Panc1 (cell line): ENCODE measurements at regions of chr2 and their contacts with region 1.

Region 1: DNA sequence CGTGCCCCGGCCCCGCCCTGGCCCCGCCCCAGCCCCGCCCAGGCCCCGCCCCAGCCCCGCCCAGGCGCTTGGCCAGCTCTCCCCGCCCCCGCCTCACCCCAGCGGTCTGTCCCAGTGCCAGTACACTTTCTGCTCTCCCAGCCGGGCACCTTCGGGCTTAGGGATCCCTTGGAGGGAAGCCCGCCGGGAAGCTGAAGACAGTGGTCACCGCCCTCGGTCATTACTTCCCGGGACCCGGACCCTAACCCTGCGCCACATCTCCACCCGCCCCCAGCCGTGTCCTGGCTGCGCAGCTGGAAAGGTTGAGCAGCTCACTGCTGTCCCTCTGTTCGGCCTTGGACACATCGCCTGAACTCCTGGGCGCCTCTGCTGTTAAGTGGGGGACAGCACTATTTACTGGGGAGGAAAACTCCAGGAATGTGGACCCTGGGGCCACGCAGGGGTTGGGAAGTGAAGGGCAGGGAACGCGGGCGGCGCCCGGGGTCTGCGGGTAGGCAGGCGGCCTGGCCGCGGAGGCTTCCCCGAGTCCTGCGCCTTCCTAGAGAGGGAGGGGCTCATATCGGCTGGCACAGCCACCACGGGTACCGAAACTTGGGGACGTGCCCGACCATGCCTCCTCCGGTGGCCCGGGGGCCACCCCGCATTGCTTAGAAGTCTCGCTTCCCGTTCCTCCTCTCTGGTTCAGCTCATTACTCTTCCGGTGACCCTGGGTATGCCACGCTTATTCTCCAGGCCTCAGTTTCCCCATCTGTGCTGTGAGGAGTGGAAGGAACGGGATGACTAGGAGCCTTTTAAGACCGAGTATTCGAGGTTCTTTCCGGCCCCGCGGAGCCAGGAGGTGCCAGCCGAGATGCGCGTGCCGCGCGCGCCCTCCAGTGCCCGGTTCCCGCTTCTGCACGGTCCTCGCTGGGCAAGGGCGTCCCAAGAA is 121.0 kb downstream of the GYPC start:
- DNase-seq: peak; percentile 45
- ATAC-seq: peak; percentile 91
- H3K4me3 ChIP-seq: peak overlapping the region; percentile 42 to 79
- H3K27ac ChIP-seq: no peak overlapping the region
- H3K4me1 ChIP-seq: no peaks in the 10 kb centered on the region
- H3K27me3 ChIP-seq: peaks cover 5% of the 10 kb centered on the region; the same call in 1 of the 2 replicates
- CTCF ChIP-seq: peak; percentile 98

Region 2: DNA sequence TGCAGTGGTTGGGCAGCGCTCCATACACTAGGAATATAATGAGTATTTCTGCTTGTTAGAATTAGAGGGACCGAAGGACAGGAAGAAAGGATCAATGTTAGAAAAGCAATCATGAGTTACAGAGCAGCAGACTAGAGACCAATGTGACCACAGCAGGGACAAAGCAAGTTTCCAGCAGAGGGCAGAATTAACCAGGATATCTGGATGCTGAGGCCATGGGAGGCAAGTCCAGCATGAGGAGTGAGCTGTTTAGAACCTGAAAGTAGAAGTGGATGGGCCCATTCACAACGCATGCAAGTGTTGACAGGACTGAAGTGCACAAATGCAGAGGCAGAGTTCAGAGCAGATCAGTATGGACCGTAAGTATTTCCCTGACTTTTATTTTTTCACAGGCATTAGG is 1031.4 kb before region 1 on chr2:
- CTCF ChIA-PET with region 1: interaction called, 3 read pairs
- POLR2A ChIA-PET with region 1: no interaction called
- in situ Hi-C with region 1: no loop called
- intact Hi-C with region 1: loop called (anchors 10 kb)
- DNase-seq: peak; percentile 4
- ATAC-seq: peak; percentile 80; the same call in 1 of the 2 replicates
- H3K4me3 ChIP-seq: no peak overlapping the region
- H3K27ac ChIP-seq: no peak overlapping the region
- H3K4me1 ChIP-seq: no peaks in the 10 kb centered on the region
- H3K27me3 ChIP-seq: no peaks in the 10 kb centered on the region
- CTCF ChIP-seq: peak; percentile 52

Region 3: DNA sequence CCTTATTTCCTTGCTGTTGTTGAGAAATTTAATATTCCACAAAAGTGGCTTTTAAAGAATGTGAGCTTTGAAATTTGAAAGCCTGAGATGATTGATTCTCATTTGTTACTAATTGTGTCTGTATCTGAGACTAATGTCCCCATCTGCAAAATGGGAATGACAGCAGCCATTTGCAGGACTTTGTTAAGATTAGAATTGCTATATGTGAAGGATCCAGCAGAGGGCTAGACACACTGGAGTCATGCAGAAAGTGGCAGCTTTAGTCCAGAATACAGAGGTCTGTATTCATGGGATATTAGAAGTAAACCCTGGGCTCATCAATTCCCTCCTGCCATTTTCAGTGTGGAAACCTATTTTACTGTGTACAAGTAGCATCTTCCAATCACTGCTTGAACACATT is 417.5 kb before region 1 on chr2:
- CTCF ChIA-PET with region 1: no interaction called
- POLR2A ChIA-PET with region 1: interaction called, 3 read pairs
- in situ Hi-C with region 1: no loop called
- intact Hi-C with region 1: loop called (anchors 10 kb)
- DNase-seq: peak; percentile 10
- ATAC-seq: no peak
- H3K4me3 ChIP-seq: no peak overlapping the region
- H3K27ac ChIP-seq: no peak overlapping the region
- H3K4me1 ChIP-seq: no peaks in the 10 kb centered on the region
- H3K27me3 ChIP-seq: no peaks in the 10 kb centered on the region
- CTCF ChIP-seq: peak; percentile 48

Region 4: GRCh38 chr2:126527836-126528507 is 249.0 kb before region 1 on chr2:
- CTCF ChIA-PET with region 1: interaction called, 4 read pairs
- POLR2A ChIA-PET with region 1: interaction called, 7 read pairs
- in situ Hi-C with region 1: no loop called
- intact Hi-C with region 1: loop called (anchors 1 kb)
- DNase-seq: peak; percentile 18
- ATAC-seq: no peak
- H3K4me3 ChIP-seq: no peak overlapping the region
- H3K27ac ChIP-seq: no peak overlapping the region
- H3K4me1 ChIP-seq: no peaks in the 10 kb centered on the region
- H3K27me3 ChIP-seq: no peaks in the 10 kb centered on the region
- CTCF ChIP-seq: peak; percentile 53

Region 5: GRCh38 chr2:126634273-126634861 is 142.6 kb before region 1 on chr2:
- CTCF ChIA-PET with region 1: no interaction called
- POLR2A ChIA-PET with region 1: no interaction called
- in situ Hi-C with region 1: no loop called
- intact Hi-C with region 1: loop called (anchors 10 kb)
- DNase-seq: no peak
- ATAC-seq: no peak
- H3K4me3 ChIP-seq: no peak overlapping the region
- H3K27ac ChIP-seq: no peak overlapping the region
- H3K4me1 ChIP-seq: no peaks in the 10 kb centered on the region
- H3K27me3 ChIP-seq: no peaks in the 10 kb centered on the region
- CTCF ChIP-seq: peak; percentile 83

Region 6: DNA sequence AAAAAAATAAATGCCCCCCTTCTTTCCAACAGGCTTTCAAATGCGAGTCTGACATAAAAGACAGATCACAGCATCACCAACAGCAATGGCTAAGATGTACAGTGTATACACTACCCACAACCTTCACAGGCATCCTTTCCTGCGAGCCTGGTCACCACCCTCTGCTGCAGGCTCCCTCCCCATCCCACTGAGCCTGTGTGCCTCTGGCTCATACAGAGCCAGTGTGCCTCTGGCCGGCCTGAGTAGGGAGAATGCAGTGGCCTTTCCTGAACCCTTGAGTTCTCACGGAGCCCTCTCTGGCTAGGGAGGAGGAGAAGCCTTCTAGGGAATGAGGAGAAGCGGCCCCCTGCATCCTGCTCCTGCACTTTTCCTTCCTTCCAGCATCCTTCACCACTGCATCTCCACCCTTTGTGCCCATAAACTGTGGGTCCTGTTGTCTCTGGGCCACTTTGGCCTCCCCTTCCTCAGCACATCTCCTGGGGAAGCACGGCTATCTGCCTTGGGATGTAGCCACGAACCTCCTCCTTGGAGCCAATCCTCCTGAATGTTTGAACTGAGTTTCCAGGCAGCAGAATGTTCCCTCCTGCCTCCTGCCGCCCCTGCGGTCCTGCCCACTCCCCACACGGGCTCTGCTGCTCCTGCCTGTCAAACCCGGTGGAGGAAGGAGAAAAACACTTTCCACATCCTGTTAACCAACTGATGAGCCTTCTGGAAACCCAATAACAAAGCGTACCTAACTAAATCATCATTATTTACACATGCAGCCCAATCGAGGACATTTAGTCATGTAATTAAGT is 98.5 kb before region 1 on chr2:
- CTCF ChIA-PET with region 1: no interaction called
- POLR2A ChIA-PET with region 1: no interaction called
- in situ Hi-C with region 1: no loop called
- intact Hi-C with region 1: no loop called
- DNase-seq: no peak
- ATAC-seq: 0 out of 2 replicates have a peak, but pooled peaks have one; percentile 26
- H3K4me3 ChIP-seq: no peak overlapping the region
- H3K27ac ChIP-seq: no peak overlapping the region
- H3K4me1 ChIP-seq: no peaks in the 10 kb centered on the region
- H3K27me3 ChIP-seq: no peaks in the 10 kb centered on the region
- CTCF ChIP-seq: no peak

Region 7: GRCh38 chr2:126744640-126745039 is 32.3 kb before region 1 on chr2:
- CTCF ChIA-PET with region 1: no interaction called
- POLR2A ChIA-PET with region 1: no interaction called
- in situ Hi-C with region 1: no loop called
- intact Hi-C with region 1: no loop called
- DNase-seq: no peak
- ATAC-seq: no peak
- H3K4me3 ChIP-seq: no peak overlapping the region
- H3K27ac ChIP-seq: no peak overlapping the region
- H3K4me1 ChIP-seq: no peaks in the 10 kb centered on the region
- H3K27me3 ChIP-seq: no peaks in the 10 kb centered on the region
- CTCF ChIP-seq: no peak

Region 8: DNA sequence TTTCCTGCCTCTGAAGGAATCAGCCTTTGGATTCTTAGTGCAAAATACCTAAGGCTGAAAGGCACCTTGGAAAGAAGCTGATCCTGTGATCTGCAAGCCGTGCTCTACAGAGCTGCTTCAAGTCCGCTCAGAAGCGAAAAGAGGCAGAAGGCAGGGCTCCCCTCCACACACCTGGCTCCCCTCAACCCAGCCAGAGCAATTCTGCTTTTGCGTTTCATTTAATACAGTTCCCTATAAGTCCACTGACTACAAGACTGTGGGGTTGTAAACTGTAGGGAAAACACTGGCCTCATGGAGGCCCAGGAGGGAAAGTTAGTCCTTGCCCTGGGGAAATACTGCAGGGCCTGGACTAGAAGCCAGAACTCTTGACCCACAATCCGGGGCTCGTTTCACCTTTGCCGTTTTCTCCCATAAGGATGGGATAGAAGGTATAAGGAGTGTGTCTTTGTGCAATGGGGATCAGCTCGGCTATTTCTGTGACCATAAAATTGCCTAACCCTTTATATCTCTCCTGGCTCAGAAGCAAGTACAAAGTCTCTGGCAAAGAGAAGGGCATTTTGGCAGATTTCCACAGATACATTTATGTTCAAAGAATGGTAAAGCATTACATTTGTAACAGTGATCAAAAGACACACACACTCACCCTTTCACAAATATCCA is 25.9 kb after region 1 on chr2:
- CTCF ChIA-PET with region 1: no interaction called
- POLR2A ChIA-PET with region 1: interaction called, 11 read pairs
- in situ Hi-C with region 1: no loop called
- intact Hi-C with region 1: no loop called
- DNase-seq: no peak
- ATAC-seq: no peak
- H3K4me3 ChIP-seq: no peak overlapping the region
- H3K27ac ChIP-seq: no peak overlapping the region
- H3K4me1 ChIP-seq: no peaks in the 10 kb centered on the region
- H3K27me3 ChIP-seq: peaks cover 3% of the 10 kb centered on the region; the same call in 1 of the 2 replicates
- CTCF ChIP-seq: no peak